ENCODE measurements at regions of chr1 and their contacts with region 1.

Region 1: GRCh38 chr1:4048076-4048475 is 148.0 kb upstream of the C1orf174 start:
- DNase-seq: peak; percentile 78
- H3K4me3 ChIP-seq: peak overlapping the region; percentile 68
- H3K27ac ChIP-seq: peak overlapping the region; percentile 98
- H3K4me1 ChIP-seq: peaks cover 68% of the 10 kb centered on the region
- CTCF ChIP-seq: peak; percentile 69

Region 2: GRCh38 chr1:3856908-3857790 is 190.9 kb before region 1 on chr1 and contains the starts of genes CEP104 and DFFB:
- CTCF ChIA-PET with region 1: interaction called, 3 read pairs
- POLR2A ChIA-PET with region 1: interaction called, 4 read pairs
- intact Hi-C with region 1: loop called (anchors 5 kb)
- DNase-seq: peak; percentile 99
- H3K4me3 ChIP-seq: peak within 1 kb of the TSS; percentile 87
- H3K27ac ChIP-seq: peak within 1 kb of the TSS; percentile 36
- H3K4me1 ChIP-seq: peaks cover 26% of the 10 kb centered on the region
- CTCF ChIP-seq: peak; percentile 69
- total RNA-seq, gene CEP104: 26.8 and 36.5 TPM in 2 replicates
- total RNA-seq, gene DFFB: 15.2 and 21.6 TPM in 2 replicates

Region 3: DNA sequence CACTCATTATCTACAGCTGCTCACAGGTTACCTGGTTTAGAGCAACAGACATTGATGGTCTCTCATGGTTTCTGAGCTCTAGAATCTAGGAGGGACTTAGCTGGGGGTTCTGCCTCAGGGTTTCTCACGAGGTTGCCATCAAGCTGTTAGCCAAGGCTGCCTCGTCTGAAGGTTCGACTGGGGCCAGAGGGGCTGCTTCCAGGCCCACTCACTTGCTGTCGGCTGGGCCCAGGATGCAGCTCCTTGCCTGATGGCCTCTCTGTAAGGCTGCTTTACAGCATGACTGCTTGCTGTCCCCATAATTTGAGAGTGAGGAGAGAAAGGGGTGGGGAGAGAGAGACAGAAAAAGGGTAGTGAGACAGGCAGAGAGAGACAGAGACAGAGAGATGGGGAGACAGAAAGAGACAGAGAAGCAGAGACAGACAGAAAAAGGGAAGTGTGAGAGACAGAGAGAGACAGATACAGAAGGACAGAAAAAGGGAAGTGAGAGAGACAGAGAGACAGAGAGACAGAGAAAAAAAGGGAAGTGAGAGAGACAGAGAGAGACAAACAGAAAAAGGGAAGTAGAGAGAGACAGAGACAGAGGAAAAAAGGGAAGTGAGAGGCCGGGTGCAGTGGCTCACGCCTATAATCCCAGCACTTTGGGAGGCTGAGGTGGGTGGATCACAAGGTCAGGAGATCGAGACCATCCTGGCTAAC is 41.3 kb before region 1 on chr1:
- CTCF ChIA-PET with region 1: no interaction called
- POLR2A ChIA-PET with region 1: no interaction called
- intact Hi-C with region 1: loop called (anchors 1 kb)
- DNase-seq: peak; percentile 72
- H3K4me3 ChIP-seq: no peak overlapping the region
- H3K27ac ChIP-seq: peak overlapping the region; percentile 95
- H3K4me1 ChIP-seq: peaks cover 25% of the 10 kb centered on the region
- CTCF ChIP-seq: no peak

Region 4: DNA sequence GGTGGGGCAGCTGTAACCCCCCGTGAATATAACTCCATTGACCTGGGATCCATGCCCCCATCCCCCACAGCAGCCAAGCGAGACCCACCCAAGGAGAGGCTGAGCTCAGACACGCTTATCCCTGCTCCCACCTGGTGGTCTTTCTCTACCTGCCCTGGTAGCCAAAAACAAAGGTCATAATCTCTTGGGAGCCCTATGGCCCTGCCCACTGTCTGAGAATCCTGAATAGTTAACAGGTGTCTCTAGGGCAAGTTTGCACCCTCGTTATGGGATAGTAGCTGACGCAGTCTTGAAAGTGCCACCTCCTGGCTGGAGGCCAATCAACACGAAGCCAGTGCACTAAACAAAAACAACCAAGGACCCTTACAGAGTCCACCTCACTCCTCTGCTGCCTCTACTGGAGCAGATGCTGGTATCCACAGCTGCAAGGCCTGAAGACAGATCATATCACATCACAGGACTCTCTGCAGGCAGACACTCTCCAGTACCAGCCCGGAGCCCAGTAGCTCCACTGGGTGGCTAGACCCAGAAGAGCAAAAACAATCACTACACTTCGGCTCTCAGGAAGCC is 13.7 kb before region 1 on chr1:
- CTCF ChIA-PET with region 1: interaction called, 4 read pairs
- POLR2A ChIA-PET with region 1: interaction called, 90 read pairs
- intact Hi-C with region 1: no loop called
- DNase-seq: peak; percentile 45
- H3K4me3 ChIP-seq: no peak overlapping the region
- H3K27ac ChIP-seq: peak overlapping the region; percentile 42
- H3K4me1 ChIP-seq: peaks cover 50% of the 10 kb centered on the region
- CTCF ChIP-seq: peak; percentile 66

Region 5: GRCh38 chr1:4309676-4310320 is 261.7 kb after region 1 on chr1:
- CTCF ChIA-PET with region 1: no interaction called
- POLR2A ChIA-PET with region 1: no interaction called
- intact Hi-C with region 1: loop called (anchors 5 kb)
- DNase-seq: peak; percentile 92
- H3K4me3 ChIP-seq: peak overlapping the region; percentile 38
- H3K27ac ChIP-seq: peak overlapping the region; percentile 65
- H3K4me1 ChIP-seq: peaks cover 54% of the 10 kb centered on the region
- CTCF ChIP-seq: no peak